ENCODE measurements at regions of chr6 and their contacts with region 1.

Region 1: GRCh38 chr6:27388293-27389197 is at the start of gene ZNF391:
- DNase-seq: peak; percentile 46 to 77 (median 67)
- ATAC-seq: peak; percentile 90
- H3K4me3 ChIP-seq: peak within 1 kb of the TSS; percentile 92
- H3K4me3 Mint-ChIP-seq: peak within 1 kb of the TSS; percentile 95 to 99 (median 98)
- H3K27ac ChIP-seq: peak within 1 kb of the TSS; percentile 78
- H3K27ac Mint-ChIP-seq: peak within 1 kb of the TSS; percentile 85 to 96 (median 93)
- H3K4me1 ChIP-seq: peaks cover 4 to 9% of the 10 kb centered on the region in 2 donors
- H3K4me1 Mint-ChIP-seq: peaks cover 9 to 31% (median 18%) of the 10 kb centered on the region in 7 donors
- H3K27me3 ChIP-seq: no peaks in the 10 kb centered on the region
- H3K27me3 Mint-ChIP-seq: peaks cover 0 to 9% (median 2%) of the 10 kb centered on the region in 5 donors
- total RNA-seq, gene ZNF391: 0.19 to 5.7 (median 3.3) TPM

Region 2: GRCh38 chr6:27177485-27178406 is 210.8 kb before region 1 on chr6:
- CTCF ChIA-PET with region 1: no interaction called
- POLR2A ChIA-PET with region 1: interaction called, 3 read pairs
- intact Hi-C with region 1: loop called in 1 of 2 experiments (anchors 2 kb)
- DNase-seq: peak; percentile 49 to 78 (median 66)
- ATAC-seq: peak; percentile 83
- H3K4me3 ChIP-seq: peak overlapping the region; percentile 99
- H3K4me3 Mint-ChIP-seq: peak overlapping the region; percentile 90 to 98 (median 96)
- H3K27ac ChIP-seq: peak overlapping the region; percentile 74
- H3K27ac Mint-ChIP-seq: peak overlapping the region; percentile 79 to 100 (median 95)
- H3K4me1 ChIP-seq: peaks cover 0 to 3% of the 10 kb centered on the region in 2 donors
- H3K4me1 Mint-ChIP-seq: peaks cover 0 to 33% (median 14%) of the 10 kb centered on the region in 7 donors
- H3K27me3 ChIP-seq: no peaks in the 10 kb centered on the region
- H3K27me3 Mint-ChIP-seq: peaks cover 0 to 37% (median 0%) of the 10 kb centered on the region in 5 donors

Region 3: GRCh38 chr6:27297857-27298730 is 90.5 kb before region 1 on chr6:
- CTCF ChIA-PET with region 1: no interaction called
- POLR2A ChIA-PET with region 1: no interaction called
- intact Hi-C with region 1: no loop called
- DNase-seq: no peak
- ATAC-seq: no peak
- H3K4me3 ChIP-seq: no peak overlapping the region
- H3K4me3 Mint-ChIP-seq: peak overlapping the region in 5 of 10 donors; percentile 1 to 31 (median 20)
- H3K27ac ChIP-seq: no peak overlapping the region
- H3K27ac Mint-ChIP-seq: peak overlapping the region in 7 of 9 donors; percentile 7 to 68 (median 27)
- H3K4me1 ChIP-seq: no peaks in the 10 kb centered on the region
- H3K4me1 Mint-ChIP-seq: peaks cover 0 to 6% (median 4%) of the 10 kb centered on the region in 7 donors
- H3K27me3 ChIP-seq: peaks cover 21 to 62% of the 10 kb centered on the region in 2 donors
- H3K27me3 Mint-ChIP-seq: peaks cover 63 to 97% (median 90%) of the 10 kb centered on the region in 5 donors

Region 4: DNA sequence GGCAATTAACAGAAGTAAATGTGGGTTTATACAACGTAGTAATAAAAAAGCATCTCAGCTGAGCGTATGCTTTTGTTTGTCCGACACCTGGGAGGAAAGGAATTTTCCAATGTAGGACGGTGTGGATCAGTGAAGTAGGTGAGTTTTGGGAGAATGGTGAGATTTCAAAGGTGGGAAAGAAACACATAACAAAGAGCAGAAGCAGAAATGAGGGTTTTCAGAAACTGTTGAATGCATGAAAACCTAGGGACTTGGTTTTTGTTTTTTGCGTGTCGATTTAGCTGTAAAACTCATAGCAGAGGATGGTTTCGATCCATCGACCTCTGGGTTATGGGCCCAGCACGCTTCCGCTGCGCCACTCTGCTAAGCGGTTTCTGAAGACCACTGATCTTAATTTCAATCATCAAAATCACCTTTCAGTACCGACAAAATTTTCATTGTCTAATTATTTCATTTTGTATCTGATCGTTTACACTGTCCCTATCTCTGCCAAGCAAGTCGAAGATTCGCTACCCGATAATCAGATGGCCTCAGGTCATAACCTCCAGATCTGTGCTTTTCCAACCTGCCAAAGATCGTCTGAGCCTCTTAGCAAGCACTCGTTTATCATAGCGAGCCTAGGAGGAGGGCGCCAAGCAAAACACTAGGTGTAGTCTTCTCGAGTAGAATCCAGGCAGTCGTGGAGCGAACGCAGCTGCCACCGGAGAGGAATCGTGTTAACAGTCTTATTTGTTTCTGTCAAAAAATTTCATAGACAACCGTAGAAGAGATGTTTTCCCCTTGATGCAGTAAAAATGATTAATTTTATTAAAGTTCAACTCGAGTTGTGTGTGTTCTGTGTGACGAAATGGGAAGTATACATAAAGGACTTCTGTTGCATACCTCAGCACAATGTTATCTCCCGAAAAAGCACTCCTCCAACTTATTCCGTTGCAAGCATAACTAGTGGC is 55.6 kb before region 1 on chr6:
- CTCF ChIA-PET with region 1: interaction called, 3 read pairs
- POLR2A ChIA-PET with region 1: no interaction called
- intact Hi-C with region 1: loop called in 1 of 2 experiments (anchors 1 kb)
- DNase-seq: peak in 8 of 9 donors; percentile 18 to 79 (median 68)
- ATAC-seq: peak; percentile 74
- H3K4me3 ChIP-seq: peak overlapping the region; percentile 60
- H3K4me3 Mint-ChIP-seq: peak overlapping the region; percentile 67 to 94 (median 87)
- H3K27ac ChIP-seq: no peak overlapping the region
- H3K27ac Mint-ChIP-seq: peak overlapping the region; percentile 0 to 97 (median 84)
- H3K4me1 ChIP-seq: peaks cover 0 to 3% of the 10 kb centered on the region in 2 donors
- H3K4me1 Mint-ChIP-seq: peaks cover 7 to 21% (median 13%) of the 10 kb centered on the region in 7 donors
- H3K27me3 ChIP-seq: peaks cover 0 to 8% of the 10 kb centered on the region in 2 donors
- H3K27me3 Mint-ChIP-seq: peaks cover 21 to 53% (median 25%) of the 10 kb centered on the region in 5 donors

Region 5: DNA sequence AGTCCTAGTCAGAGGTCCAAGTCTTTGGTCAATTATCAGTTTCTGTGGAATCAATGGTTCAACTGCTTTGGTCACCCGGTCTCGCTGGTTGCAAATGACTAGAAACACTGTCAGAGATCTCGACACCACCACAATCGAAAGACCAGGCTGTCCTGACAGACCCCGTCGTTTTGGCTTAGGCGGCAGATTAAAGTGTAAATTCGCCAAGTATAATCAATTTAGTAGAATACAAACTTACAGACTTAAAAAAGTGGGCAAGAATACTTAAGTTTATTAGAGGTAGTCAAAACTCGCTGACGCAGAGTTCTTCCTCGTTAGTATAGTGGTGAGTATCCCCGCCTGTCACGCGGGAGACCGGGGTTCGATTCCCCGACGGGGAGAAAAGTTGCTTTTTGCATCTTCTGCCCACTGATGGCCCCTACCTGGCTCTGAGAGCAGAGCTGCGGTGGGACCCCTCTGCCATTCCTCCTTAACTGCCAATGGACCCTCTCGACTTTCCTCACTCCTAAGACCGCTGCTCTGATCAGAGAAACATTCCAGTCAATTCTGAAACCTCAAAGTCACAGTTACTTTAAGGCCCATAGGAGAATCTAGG is 115.0 kb after region 1 on chr6:
- CTCF ChIA-PET with region 1: no interaction called
- POLR2A ChIA-PET with region 1: no interaction called
- intact Hi-C with region 1: loop called in 1 of 2 experiments (anchors 1 kb)
- DNase-seq: peak; percentile 73 to 86 (median 80)
- ATAC-seq: peak; percentile 75
- H3K4me3 ChIP-seq: peak overlapping the region; percentile 61
- H3K4me3 Mint-ChIP-seq: peak overlapping the region; percentile 85 to 99 (median 91)
- H3K27ac ChIP-seq: peak overlapping the region; percentile 57
- H3K27ac Mint-ChIP-seq: peak overlapping the region; percentile 82 to 97 (median 91)
- H3K4me1 ChIP-seq: peaks cover 6% of the 10 kb centered on the region in 2 donors
- H3K4me1 Mint-ChIP-seq: peaks cover 15 to 41% (median 36%) of the 10 kb centered on the region in 7 donors
- H3K27me3 ChIP-seq: no peaks in the 10 kb centered on the region
- H3K27me3 Mint-ChIP-seq: peaks cover 5 to 62% (median 11%) of the 10 kb centered on the region in 5 donors

Region 6: DNA sequence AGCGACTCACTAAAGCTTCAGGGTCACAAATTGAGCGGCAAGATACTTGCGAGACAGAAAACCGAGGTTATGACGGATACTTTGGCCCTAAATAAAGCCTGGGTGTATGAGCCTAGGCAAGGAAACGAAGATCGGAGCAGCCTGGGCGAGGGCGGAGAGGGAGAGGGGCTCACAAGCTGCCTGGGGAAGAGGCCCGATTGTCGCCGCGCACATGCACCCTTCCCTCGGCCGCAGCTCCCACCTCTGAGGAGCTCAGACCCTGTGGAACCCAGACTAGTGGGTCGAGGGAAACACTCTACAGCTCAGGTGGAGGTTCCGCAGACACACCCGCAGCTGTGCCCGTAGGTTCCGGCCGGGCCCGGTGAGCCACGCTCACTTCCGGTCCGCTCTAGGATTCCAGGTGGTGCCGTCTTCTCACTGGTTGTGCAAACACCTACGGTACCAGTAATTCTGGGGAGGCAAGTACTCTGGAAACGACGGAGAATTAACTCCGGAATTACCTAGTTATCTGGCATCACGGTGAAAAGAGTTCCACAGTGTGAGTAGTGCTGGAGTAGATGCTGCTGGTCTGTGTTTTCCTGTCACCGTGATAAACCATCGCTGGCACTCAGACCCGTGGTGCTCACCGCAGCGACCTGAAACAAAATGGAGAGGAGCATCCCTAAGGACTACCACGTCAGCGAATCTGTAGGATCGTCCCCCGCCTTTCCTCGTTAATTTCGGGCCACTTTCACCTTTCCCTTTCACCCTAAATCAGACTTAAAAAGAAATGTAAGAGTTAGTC is 1198.6 kb after region 1 on chr6:
- CTCF ChIA-PET with region 1: no interaction called
- POLR2A ChIA-PET with region 1: no interaction called
- intact Hi-C with region 1: loop called in 1 of 2 experiments (anchors 2 kb)
- DNase-seq: peak; percentile 29 to 70 (median 60)
- ATAC-seq: peak; percentile 77
- H3K4me3 ChIP-seq: peak overlapping the region; percentile 54
- H3K4me3 Mint-ChIP-seq: peak overlapping the region; percentile 82 to 90 (median 88)
- H3K27ac ChIP-seq: no peak overlapping the region
- H3K27ac Mint-ChIP-seq: peak overlapping the region in 8 of 9 donors; percentile 5 to 88 (median 60)
- H3K4me1 ChIP-seq: peaks cover 0 to 9% of the 10 kb centered on the region in 2 donors
- H3K4me1 Mint-ChIP-seq: peaks cover 11 to 43% (median 34%) of the 10 kb centered on the region in 7 donors
- H3K27me3 ChIP-seq: peaks cover 10 to 28% of the 10 kb centered on the region in 2 donors
- H3K27me3 Mint-ChIP-seq: peaks cover 57 to 85% (median 76%) of the 10 kb centered on the region in 5 donors